Transverse colon (tissue), 4 donors: ENCODE measurements at regions of chrX and their contacts with region 1.

Region 1: DNA sequence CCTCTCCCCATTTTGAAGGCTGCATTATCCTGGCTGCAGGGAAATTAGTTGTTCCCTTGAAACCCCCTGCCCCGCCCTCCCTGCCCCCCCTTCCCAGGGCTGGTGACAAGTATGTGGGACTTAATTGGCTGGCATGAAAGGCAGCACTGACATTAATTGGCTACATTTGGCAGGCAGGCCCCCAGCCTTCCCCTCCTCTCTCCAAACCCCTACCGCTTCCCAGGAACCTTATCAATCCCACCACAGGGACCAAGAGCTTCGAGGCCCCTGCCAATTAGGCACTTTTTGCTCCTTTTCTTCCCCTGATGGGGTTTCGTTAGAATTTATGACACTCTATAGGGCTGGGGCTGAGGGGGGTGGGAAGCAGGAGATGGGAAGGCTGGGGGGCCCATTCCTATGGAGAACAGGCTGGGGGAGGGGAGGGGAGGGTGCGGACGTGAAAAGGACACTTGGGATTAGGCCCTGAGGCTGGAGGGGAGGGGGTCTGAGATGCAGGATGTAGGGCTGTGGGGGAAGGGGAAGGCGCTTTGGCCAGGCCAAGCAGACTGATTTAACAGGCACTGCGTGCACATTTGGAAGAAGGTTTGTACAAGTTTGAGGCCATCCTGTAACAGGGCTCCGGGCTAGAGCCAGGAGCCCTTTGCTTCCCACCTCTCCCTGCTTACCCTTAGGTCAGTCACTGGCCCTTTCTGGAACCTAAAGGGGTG is 52.2 kb downstream of the EFNB1 start:
- DNase-seq: no peak
- H3K4me3 ChIP-seq: no peak overlapping the region
- H3K27ac ChIP-seq: no peak overlapping the region
- H3K4me1 ChIP-seq: no peaks in the 10 kb centered on the region
- H3K27me3 ChIP-seq: no peaks in the 10 kb centered on the region
- CTCF ChIP-seq: no peak
- EP300 ChIP-seq: no peak
- POLR2A ChIP-seq: no peak

Region 2: DNA sequence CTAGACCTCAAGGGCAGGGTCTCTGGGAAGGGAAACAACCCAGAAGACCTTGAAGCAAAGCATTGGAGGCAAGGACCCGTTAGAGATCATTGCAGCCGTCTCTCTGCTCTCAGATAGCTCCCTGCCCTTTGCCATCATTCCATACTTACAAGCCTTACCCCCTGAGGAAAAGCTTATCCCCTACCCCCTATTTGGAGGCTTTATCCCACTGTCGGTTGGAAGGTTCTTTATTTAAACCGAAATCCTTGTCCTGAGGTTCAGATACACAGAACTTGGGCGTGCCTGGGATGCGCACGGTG is 32.2 kb after region 1 on chrX:
- in situ Hi-C with region 1: no loop called
- intact Hi-C with region 1: loop called (anchors 1 kb)
- DNase-seq: no peak
- H3K4me3 ChIP-seq: no peak overlapping the region
- H3K27ac ChIP-seq: no peak overlapping the region
- H3K4me1 ChIP-seq: no peaks in the 10 kb centered on the region
- H3K27me3 ChIP-seq: no peaks in the 10 kb centered on the region
- CTCF ChIP-seq: no peak
- EP300 ChIP-seq: no peak
- POLR2A ChIP-seq: no peak

Region 3: GRCh38 chrX:68945603-68946228 is 64.7 kb after region 1 on chrX:
- in situ Hi-C with region 1: no loop called
- intact Hi-C with region 1: no loop called
- DNase-seq: peak; percentile 12
- H3K4me3 ChIP-seq: no peak overlapping the region
- H3K27ac ChIP-seq: no peak overlapping the region
- H3K4me1 ChIP-seq: peaks cover 0 to 3% (median 1%) of the 10 kb centered on the region in 4 donors
- H3K27me3 ChIP-seq: no peaks in the 10 kb centered on the region
- CTCF ChIP-seq: peak in 3 of 5 experiments; percentile 9 to 18 (median 11)
- EP300 ChIP-seq: no peak
- POLR2A ChIP-seq: no peak